ENCODE measurements at regions of chr16 and their contacts with region 1.

Region 1: GRCh38 chr16:2251483-2252240 is at the start of gene ECI1:
- DNase-seq: peak; percentile 92
- ATAC-seq: peak; percentile 96
- H3K4me3 ChIP-seq: peak within 1 kb of the TSS; percentile 51 to 82 (median 68)
- H3K4me3 Mint-ChIP-seq: peak within 1 kb of the TSS; percentile 88
- H3K27ac ChIP-seq: peak within 1 kb of the TSS; percentile 68 to 72
- H3K27ac Mint-ChIP-seq: peak within 1 kb of the TSS; percentile 89
- H3K4me1 ChIP-seq: peaks cover 12 to 41% of the 10 kb centered on the region in 2 donors
- H3K4me1 Mint-ChIP-seq: peaks cover 26% of the 10 kb centered on the region
- H3K27me3 ChIP-seq: no peaks in the 10 kb centered on the region
- H3K27me3 Mint-ChIP-seq: no peaks in the 10 kb centered on the region
- CTCF ChIP-seq: peak; percentile 58
- total RNA-seq, gene ECI1: 38.4 and 46.4 TPM in 2 replicates

Region 2: GRCh38 chr16:1481906-1482835 is 769.5 kb before region 1 on chr16:
- CTCF ChIA-PET with region 1: no interaction called
- POLR2A ChIA-PET with region 1: no interaction called
- intact Hi-C with region 1: no loop called
- DNase-seq: no peak
- ATAC-seq: no peak
- H3K4me3 ChIP-seq: no peak overlapping the region
- H3K4me3 Mint-ChIP-seq: peak overlapping the region; percentile 4
- H3K27ac ChIP-seq: peak overlapping the region; percentile 41 to 95
- H3K27ac Mint-ChIP-seq: peak overlapping the region; percentile 48
- H3K4me1 ChIP-seq: peaks cover 24 to 37% of the 10 kb centered on the region in 2 donors
- H3K4me1 Mint-ChIP-seq: peaks cover 35% of the 10 kb centered on the region
- H3K27me3 ChIP-seq: no peaks in the 10 kb centered on the region
- H3K27me3 Mint-ChIP-seq: no peaks in the 10 kb centered on the region
- CTCF ChIP-seq: no peak

Region 3: DNA sequence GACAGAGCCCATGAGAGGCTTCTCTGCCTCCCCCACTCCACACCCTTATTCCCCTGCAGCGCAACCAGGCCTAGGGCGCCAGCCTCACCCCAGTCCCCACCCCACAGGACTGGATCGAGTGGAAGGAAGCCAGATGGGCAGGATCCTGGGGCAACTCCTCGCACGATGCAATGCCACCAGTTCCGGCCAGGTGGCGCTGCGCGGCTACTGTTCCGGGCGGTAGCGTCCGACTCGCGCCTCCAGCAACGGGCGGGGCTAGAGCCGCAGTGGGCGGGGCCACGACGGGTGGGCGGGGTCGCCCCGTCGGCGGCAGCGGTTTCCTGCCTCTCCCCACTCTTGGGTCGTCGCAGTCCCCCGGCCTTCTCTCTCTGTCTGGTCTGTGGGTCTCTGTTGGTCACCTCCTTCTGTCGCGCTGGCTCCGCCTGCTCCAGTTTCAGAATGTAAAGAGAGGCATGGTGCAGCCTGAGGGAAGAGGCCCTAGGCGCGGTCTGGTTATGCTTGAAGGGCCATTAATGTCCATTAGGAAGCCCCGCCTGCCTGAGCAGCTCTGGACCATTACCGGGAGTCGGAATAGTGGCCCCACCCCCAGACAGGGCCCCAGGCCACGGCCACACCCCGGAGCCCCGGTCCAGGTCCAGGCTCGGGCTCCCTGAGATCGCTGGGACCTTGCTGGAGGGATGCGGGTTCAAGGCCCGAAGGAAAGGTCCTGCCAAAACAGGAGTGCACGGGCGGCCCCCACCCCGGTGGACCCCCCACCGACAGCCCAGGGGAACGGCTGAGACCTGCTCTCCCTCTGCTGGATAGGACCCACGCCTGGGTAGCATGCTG is 228.3 kb before region 1 on chr16:
- CTCF ChIA-PET with region 1: no interaction called
- POLR2A ChIA-PET with region 1: no interaction called
- intact Hi-C with region 1: loop called (anchors 10 kb)
- DNase-seq: peak; percentile 94
- ATAC-seq: peak; percentile 94
- H3K4me3 ChIP-seq: peak overlapping the region in 4 of 5 experiments; percentile 34 to 57 (median 42)
- H3K4me3 Mint-ChIP-seq: peak overlapping the region; percentile 88
- H3K27ac ChIP-seq: no peak overlapping the region
- H3K27ac Mint-ChIP-seq: peak overlapping the region; percentile 85
- H3K4me1 ChIP-seq: peaks cover 34 to 41% of the 10 kb centered on the region in 2 donors
- H3K4me1 Mint-ChIP-seq: peaks cover 19% of the 10 kb centered on the region
- H3K27me3 ChIP-seq: peaks cover 0 to 64% (median 26%) of the 10 kb centered on the region in 4 experiments
- H3K27me3 Mint-ChIP-seq: peaks cover 25% of the 10 kb centered on the region
- CTCF ChIP-seq: peak; percentile 90

Region 4: DNA sequence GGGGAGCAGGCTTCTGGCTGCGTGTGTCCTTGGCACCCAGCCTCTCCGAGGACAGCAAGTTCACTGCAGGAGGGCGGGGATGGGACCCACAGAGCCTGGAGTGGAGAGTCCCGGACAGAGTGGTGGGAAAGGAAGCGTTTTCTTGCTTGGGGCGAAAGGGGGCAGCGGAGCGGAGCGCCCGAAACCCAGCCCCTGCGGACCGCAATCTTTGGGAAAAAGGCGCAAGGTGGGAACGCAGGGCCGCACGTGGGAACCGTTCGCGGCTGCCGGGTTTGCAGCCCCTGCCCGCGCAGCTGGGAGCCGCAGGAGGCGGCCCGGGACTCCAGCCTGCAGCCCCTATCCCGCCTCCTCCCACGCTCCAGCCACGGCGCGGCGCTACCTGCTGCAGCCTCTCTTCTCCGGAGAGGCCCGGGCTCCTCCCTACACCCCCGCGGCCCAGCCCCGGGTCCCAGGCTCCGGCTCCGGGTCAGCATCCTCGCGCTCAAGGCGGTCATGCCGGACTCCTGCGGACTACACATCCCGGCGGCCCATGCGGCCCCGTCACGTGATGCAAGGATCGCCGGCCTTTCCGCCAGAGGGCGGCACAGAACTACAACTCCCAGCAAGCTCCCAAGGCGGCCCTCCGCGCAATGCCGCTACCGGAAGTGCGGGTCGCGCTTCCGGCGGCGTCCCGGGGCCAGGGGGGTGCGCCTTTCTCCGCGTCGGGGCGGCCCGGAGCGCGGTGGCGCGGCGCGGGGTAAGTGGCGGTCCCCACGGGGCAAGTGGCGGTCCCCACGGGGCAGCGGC is 204.1 kb before region 1 on chr16 and contains the starts of genes NTHL1 and TSC2:
- CTCF ChIA-PET with region 1: no interaction called
- POLR2A ChIA-PET with region 1: no interaction called
- intact Hi-C with region 1: no loop called
- DNase-seq: peak; percentile 95
- ATAC-seq: peak; percentile 97
- H3K4me3 ChIP-seq: peak within 1 kb of the TSS; percentile 27 to 79 (median 78)
- H3K4me3 Mint-ChIP-seq: peak within 1 kb of the TSS; percentile 91
- H3K27ac ChIP-seq: peak within 1 kb of the TSS in 1 of 2 donors; percentile 63
- H3K27ac Mint-ChIP-seq: peak within 1 kb of the TSS; percentile 76
- H3K4me1 ChIP-seq: peaks cover 17 to 35% of the 10 kb centered on the region in 2 donors
- H3K4me1 Mint-ChIP-seq: peaks cover 20% of the 10 kb centered on the region
- H3K27me3 ChIP-seq: no peaks in the 10 kb centered on the region
- H3K27me3 Mint-ChIP-seq: no peaks in the 10 kb centered on the region
- CTCF ChIP-seq: peak; percentile 26
- total RNA-seq, gene NTHL1: 14.1 and 17.5 TPM in 2 replicates
- total RNA-seq, gene TSC2: 188 and 194 TPM in 2 replicates

Region 5: DNA sequence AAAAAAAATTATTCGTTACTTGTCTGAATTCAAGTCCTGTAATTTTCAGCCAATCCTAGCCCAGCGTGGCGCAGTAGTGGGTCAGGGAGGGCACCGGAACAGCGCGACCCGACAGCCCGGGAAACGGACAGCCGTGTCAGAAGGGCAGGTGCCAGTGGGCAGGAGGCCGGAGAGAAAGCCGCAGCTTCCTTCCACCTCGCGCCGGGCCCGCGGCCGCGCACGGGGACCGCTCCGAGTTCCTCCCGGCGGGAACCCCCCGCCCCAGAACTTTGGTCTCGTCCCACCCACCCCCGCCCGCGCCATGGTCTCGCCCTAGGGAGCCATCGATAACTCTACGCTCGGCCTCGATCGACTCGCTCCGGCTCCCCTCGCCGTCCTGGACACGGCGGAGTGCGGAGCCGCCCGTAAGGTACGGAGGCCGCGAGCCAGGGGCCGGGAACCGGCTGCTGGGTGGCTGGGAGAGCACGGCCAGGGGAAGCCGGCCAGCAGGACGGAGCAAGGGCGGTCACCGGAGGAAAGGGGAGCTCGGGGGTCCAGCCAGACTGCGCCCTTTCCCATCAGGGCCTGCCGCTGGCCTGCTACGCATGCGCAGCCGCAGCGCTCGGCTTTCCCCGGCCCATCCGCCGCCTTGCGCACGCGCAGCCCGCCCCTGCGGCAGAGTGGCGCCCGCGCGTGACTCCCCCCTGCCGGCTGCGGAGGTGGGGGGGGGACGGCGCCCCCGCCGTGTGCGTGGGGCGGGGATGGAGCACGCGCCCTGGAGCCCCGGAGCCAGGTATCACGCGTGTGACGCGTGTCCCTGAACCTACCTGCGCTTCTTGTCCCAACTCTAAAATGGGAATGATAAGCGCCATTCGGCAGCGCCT is 46.3 kb before region 1 on chr16 and contains the start of gene MLST8:
- CTCF ChIA-PET with region 1: interaction called, 6 read pairs
- POLR2A ChIA-PET with region 1: interaction called, 11 read pairs
- intact Hi-C with region 1: loop called (anchors 2 kb)
- DNase-seq: peak; percentile 98
- ATAC-seq: peak; percentile 90
- H3K4me3 ChIP-seq: peak within 1 kb of the TSS; percentile 73 to 94 (median 76)
- H3K4me3 Mint-ChIP-seq: peak within 1 kb of the TSS; percentile 87
- H3K27ac ChIP-seq: peak within 1 kb of the TSS; percentile 86 to 89
- H3K27ac Mint-ChIP-seq: peak within 1 kb of the TSS; percentile 94
- H3K4me1 ChIP-seq: peaks cover 12 to 22% of the 10 kb centered on the region in 2 donors
- H3K4me1 Mint-ChIP-seq: peaks cover 21% of the 10 kb centered on the region
- H3K27me3 ChIP-seq: no peaks in the 10 kb centered on the region
- H3K27me3 Mint-ChIP-seq: peaks cover 3% of the 10 kb centered on the region
- CTCF ChIP-seq: peak; percentile 32
- total RNA-seq, gene MLST8: 36.1 and 39.0 TPM in 2 replicates

Region 6: GRCh38 chr16:2340564-2341455 is 89.1 kb after region 1 on chr16 and contains the start of gene ABCA3:
- CTCF ChIA-PET with region 1: interaction called, 4 read pairs
- POLR2A ChIA-PET with region 1: no interaction called
- intact Hi-C with region 1: loop called (anchors 5 kb)
- DNase-seq: peak; percentile 96
- ATAC-seq: peak; percentile 83
- H3K4me3 ChIP-seq: peak within 1 kb of the TSS; percentile 17 to 69 (median 58)
- H3K4me3 Mint-ChIP-seq: peak within 1 kb of the TSS; percentile 86
- H3K27ac ChIP-seq: no peak within 1 kb of the TSS
- H3K27ac Mint-ChIP-seq: peak within 1 kb of the TSS; percentile 90
- H3K4me1 ChIP-seq: peaks cover 15 to 19% of the 10 kb centered on the region in 2 donors
- H3K4me1 Mint-ChIP-seq: peaks cover 12% of the 10 kb centered on the region
- H3K27me3 ChIP-seq: peaks cover 0 to 22% (median 3%) of the 10 kb centered on the region in 4 experiments
- H3K27me3 Mint-ChIP-seq: no peaks in the 10 kb centered on the region
- CTCF ChIP-seq: peak; percentile 100
- total RNA-seq, gene ABCA3: 5.1 and 5.4 TPM in 2 replicates

Region 7: DNA sequence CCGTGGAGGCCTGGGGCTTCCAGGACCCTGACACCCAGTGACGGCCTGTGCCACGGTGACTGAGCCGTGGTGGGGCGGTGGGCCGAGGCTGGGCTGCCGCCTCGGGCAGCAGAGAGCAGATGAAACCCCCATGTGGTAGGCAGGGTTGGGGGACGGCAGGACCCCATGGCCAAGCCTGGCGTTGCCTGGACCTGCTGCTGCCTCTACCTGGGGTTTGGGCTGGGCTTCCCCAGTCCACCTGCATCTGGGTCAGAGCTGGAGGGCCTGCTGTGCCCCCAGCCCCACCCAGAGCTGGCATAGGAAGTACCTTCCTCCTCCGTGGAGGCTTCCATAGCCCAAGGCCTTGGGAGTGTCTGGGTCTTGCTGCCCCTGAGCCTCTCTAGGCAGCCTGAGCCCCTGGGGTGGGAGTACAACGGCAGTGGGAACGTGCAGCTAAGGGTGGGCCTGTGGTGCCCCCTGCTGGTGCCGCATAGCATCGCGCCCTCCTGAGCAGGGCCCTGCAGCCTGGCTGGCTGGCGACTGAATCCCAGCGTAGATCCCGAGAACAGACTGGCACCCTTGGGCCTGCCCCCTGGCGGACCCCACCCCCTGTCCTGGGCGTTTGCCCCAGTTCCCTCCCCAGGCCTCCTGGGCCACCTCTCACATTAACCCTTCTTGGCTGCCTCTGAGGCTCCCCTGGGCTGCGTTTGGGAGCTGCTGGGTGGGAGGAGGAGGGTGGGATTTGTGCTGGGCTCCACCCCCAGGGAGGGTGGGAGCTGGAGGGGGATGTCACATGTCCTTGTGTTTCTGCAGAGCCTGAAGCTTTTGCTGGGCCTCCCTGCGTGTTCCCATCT is 249.5 kb after region 1 on chr16:
- CTCF ChIA-PET with region 1: interaction called, 15 read pairs
- POLR2A ChIA-PET with region 1: no interaction called
- intact Hi-C with region 1: loop called (anchors 5 kb)
- DNase-seq: peak; percentile 86
- ATAC-seq: peak; percentile 97
- H3K4me3 ChIP-seq: no peak overlapping the region
- H3K4me3 Mint-ChIP-seq: no peak overlapping the region
- H3K27ac ChIP-seq: no peak overlapping the region
- H3K27ac Mint-ChIP-seq: no peak overlapping the region
- H3K4me1 ChIP-seq: peaks cover 0 to 8% of the 10 kb centered on the region in 2 donors
- H3K4me1 Mint-ChIP-seq: peaks cover 11% of the 10 kb centered on the region
- H3K27me3 ChIP-seq: no peaks in the 10 kb centered on the region
- H3K27me3 Mint-ChIP-seq: no peaks in the 10 kb centered on the region
- CTCF ChIP-seq: peak; percentile 99

Measured in B cell (primary cell).